CD14-positive monocyte (primary cell): ENCODE measurements at regions of chr13 and their contacts with region 1.

Region 1: GRCh38 chr13:50081679-50082425 is 66.6 kb downstream of the KCNRG start:
- DNase-seq: peak; percentile 97 to 99 (median 97)
- H3K4me3 ChIP-seq: peak overlapping the region; percentile 79 to 94 (median 91)
- H3K4me3 Mint-ChIP-seq: peak overlapping the region; percentile 99 to 100
- H3K27ac ChIP-seq: peak overlapping the region; percentile 80 to 85
- H3K27ac Mint-ChIP-seq: peak overlapping the region; percentile 90 to 98 (median 95)
- H3K4me1 ChIP-seq: peaks cover 49 to 74% of the 10 kb centered on the region in 2 donors
- H3K4me1 Mint-ChIP-seq: peaks cover 50% of the 10 kb centered on the region
- H3K27me3 ChIP-seq: no peaks in the 10 kb centered on the region
- H3K27me3 Mint-ChIP-seq: no peaks in the 10 kb centered on the region
- CTCF ChIP-seq: no peak

Region 2: GRCh38 chr13:49954674-49955491 is 127.0 kb before region 1 on chr13:
- intact Hi-C with region 1: no loop called
- DNase-seq: no peak
- H3K4me3 ChIP-seq: no peak overlapping the region
- H3K4me3 Mint-ChIP-seq: no peak overlapping the region
- H3K27ac ChIP-seq: no peak overlapping the region
- H3K27ac Mint-ChIP-seq: peak overlapping the region in 1 of 7 donors; percentile 42
- H3K4me1 ChIP-seq: peaks cover 10 to 15% of the 10 kb centered on the region in 2 donors
- H3K4me1 Mint-ChIP-seq: peaks cover 15% of the 10 kb centered on the region
- H3K27me3 ChIP-seq: no peaks in the 10 kb centered on the region
- H3K27me3 Mint-ChIP-seq: peaks cover 0 to 1% (median 0%) of the 10 kb centered on the region in 3 donors
- CTCF ChIP-seq: no peak

Region 3: DNA sequence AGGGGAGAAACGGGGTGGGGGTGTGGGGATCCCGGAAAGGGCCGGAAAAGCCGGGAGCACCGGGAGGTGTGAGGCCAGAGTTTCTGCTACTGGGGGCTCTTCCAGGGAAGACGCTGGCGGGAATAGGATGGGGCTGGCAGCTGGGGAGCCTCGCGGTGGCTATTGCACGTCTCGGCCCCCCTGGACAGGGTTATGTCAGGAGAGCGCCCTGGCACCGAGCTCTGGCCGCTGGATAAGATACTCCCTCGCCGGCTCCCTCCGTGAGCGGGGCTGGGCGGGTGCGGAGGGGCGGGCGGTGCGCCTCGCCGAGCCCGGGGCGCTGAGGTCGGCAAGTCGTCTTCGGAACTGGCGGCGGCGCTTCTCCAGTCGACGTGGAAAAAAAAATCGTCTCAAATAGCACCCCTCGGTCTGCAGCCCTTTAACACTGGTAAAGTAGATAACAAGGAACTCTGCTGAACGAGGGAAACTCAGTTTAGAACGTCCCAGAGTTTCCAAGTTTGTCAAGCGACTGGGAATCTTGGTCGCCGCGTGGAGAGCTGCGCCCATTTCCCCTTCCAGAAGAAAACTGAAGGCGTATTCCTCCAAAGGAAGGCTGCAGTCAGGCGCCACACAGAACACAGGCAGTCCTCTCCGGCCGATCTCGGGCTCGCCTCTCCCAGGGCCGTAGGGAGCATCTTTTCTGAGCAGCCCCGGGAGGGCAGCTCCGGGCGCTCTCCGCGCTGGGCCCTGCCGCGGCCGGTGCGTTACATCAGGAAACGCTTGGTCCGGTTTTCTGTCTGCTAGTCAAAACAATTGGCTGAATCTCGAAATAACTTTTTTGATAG is 48.5 kb after region 1 on chr13:
- intact Hi-C with region 1: loop called in 1 of 2 experiments (anchors 2 kb)
- DNase-seq: peak; percentile 60 to 73 (median 69)
- H3K4me3 ChIP-seq: peak overlapping the region; percentile 40 to 78 (median 49)
- H3K4me3 Mint-ChIP-seq: peak overlapping the region; percentile 88 to 92
- H3K27ac ChIP-seq: peak overlapping the region in 1 of 2 donors; percentile 46
- H3K27ac Mint-ChIP-seq: peak overlapping the region in 5 of 7 donors; percentile 48 to 88 (median 79)
- H3K4me1 ChIP-seq: peaks cover 63 to 71% of the 10 kb centered on the region in 2 donors
- H3K4me1 Mint-ChIP-seq: peaks cover 61% of the 10 kb centered on the region
- H3K27me3 ChIP-seq: peaks cover 20 to 69% of the 10 kb centered on the region in 2 donors
- H3K27me3 Mint-ChIP-seq: peaks cover 62 to 73% (median 65%) of the 10 kb centered on the region in 3 donors
- CTCF ChIP-seq: no peak